ENCODE measurements at regions of chr11 and their contacts with region 1.

Region 1: DNA sequence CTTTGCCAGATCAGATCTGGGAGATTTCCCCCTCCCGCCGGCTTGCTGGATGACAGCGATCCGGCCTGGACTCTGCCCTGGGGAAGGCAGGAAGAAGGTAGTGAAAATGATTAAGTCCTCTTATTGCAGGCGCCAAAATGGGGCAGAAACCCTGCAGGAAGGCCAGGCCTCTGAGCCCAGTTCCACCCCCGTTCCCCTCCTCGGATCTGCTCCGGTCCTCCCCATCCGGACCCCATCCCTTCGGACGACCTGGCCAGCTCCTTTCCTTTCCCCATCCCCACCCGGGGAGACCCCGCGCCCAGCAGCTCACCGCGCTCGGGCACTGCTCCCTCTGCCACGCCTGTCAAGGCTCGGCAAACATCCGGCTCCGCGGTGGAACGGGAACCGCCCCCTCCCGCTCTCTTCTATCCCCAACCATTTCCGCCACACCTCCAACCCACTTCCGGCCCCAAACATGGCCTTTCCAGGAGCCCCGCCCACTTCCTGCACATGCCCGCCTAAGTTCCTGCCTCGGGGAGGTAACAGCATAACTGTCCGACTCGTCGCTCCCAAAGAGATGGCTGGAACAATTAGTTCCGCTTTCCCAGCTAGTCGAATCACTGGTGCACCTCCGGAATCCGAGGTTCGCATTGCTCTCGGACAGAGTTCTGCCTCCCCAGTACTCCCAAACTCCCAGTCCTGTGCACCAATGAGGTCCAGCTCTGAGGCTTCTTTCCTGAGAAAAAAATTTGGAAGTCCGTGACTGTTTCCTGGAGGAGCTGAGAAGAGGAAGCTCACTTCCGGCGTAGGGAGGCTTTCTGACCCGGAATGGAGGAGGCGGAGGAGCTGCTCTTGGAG is at the starts of genes ARHGAP1 and ZNF408:
- DNase-seq: peak; percentile 100
- ATAC-seq: peak; percentile 95
- H3K4me3 Mint-ChIP-seq: peak within 1 kb of the TSS; percentile 82
- H3K27ac Mint-ChIP-seq: peak within 1 kb of the TSS; percentile 96
- H3K4me1 Mint-ChIP-seq: peaks cover 42% of the 10 kb centered on the region
- H3K27me3 Mint-ChIP-seq: no peaks in the 10 kb centered on the region
- total RNA-seq, gene ARHGAP1: 40.2 to 50.0 TPM
- total RNA-seq, gene ZNF408: 8.8 to 9.0 TPM

Region 2: GRCh38 chr11:45804761-45805304 is 895.6 kb before region 1 on chr11 and contains the start of gene SLC35C1:
- CTCF ChIA-PET with region 1: no interaction called
- POLR2A ChIA-PET with region 1: no interaction called
- intact Hi-C with region 1: loop called in 1 of 2 experiments (anchors 2 kb)
- DNase-seq: peak; percentile 98
- ATAC-seq: peak; percentile 97
- H3K4me3 Mint-ChIP-seq: peak within 1 kb of the TSS; percentile 91
- H3K27ac Mint-ChIP-seq: peak within 1 kb of the TSS; percentile 86
- H3K4me1 Mint-ChIP-seq: peaks cover 42% of the 10 kb centered on the region
- H3K27me3 Mint-ChIP-seq: no peaks in the 10 kb centered on the region
- total RNA-seq, gene SLC35C1: 9.6 to 9.8 TPM

Region 3: DNA sequence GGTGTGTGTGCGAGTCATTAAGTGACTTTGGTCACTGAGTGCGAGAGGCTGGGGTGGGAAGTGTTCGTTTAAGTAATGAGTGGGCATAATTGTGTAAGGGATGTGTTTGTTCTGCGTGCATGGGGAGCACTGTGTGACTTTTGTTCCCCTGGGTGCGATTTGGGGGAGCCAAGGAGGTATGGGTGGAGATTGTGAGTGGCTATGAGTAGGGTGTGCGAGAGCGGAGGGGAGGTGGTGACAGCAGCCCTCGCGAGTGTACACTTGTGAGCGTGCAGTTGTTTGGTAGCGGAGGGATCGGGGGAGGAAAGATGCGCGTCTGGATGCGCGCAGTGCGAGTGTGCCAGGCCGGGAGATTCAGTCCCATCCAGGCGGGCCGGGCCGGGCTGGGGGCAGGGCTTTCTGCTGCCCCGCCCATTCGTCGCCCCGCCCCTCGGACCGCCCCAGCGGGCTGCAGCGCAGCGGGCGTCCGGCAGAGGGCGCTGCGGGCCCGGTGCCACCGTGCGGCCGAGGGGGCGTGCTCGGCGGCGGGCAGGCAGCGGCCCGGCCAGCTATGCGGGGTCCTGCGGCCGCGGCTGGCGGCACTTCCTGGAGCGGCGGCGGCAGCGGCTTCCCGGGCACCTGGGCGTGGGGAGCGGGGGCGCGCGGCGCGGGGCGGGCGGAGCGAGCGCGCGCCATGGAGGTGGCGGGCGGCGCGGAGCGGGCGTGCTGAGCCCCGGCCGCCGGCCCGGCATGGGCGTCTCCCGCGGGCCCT is 353.4 kb before region 1 on chr11 and contains the start of gene DGKZ:
- CTCF ChIA-PET with region 1: interaction called, 4 read pairs
- POLR2A ChIA-PET with region 1: no interaction called
- intact Hi-C with region 1: loop called in 1 of 2 experiments (anchors 1 kb)
- DNase-seq: peak; percentile 93
- ATAC-seq: peak; percentile 66
- H3K4me3 Mint-ChIP-seq: peak within 1 kb of the TSS; percentile 90
- H3K27ac Mint-ChIP-seq: peak within 1 kb of the TSS; percentile 96
- H3K4me1 Mint-ChIP-seq: peaks cover 81% of the 10 kb centered on the region
- H3K27me3 Mint-ChIP-seq: no peaks in the 10 kb centered on the region
- total RNA-seq, gene DGKZ: 87.6 to 101 TPM

Region 4: GRCh38 chr11:46616998-46617675 is 83.3 kb before region 1 on chr11 and contains the starts of genes ATG13 and HARBI1:
- CTCF ChIA-PET with region 1: interaction called, 4 read pairs
- POLR2A ChIA-PET with region 1: interaction called, 4 read pairs
- intact Hi-C with region 1: loop called (anchors 1 kb)
- DNase-seq: peak; percentile 95
- ATAC-seq: peak; percentile 96
- H3K4me3 Mint-ChIP-seq: peak within 1 kb of the TSS; percentile 89
- H3K27ac Mint-ChIP-seq: peak within 1 kb of the TSS; percentile 100
- H3K4me1 Mint-ChIP-seq: peaks cover 31% of the 10 kb centered on the region
- H3K27me3 Mint-ChIP-seq: no peaks in the 10 kb centered on the region
- total RNA-seq, gene ATG13: 39.4 to 56.4 TPM
- total RNA-seq, gene HARBI1: 2.3 to 2.7 TPM

Region 5: DNA sequence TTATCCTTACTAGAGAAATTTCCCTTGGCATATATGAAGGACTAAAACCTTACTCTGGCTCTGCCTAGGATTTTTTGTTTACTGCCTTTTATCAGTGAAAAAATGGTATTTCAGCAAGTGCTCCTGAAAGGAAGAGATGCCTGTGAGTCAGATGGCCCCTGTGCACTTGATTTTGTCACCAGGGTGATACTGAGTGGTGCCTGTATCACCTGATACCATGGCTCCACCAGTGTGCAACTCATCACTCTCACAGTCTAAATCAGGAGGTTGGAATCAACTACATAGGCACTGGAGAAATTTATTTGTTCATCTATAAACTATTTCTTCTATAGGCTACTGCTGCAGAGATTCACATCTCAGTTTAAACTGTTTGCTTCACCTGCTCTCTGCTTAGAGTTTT is 61.8 kb after region 1 on chr11:
- CTCF ChIA-PET with region 1: no interaction called
- POLR2A ChIA-PET with region 1: no interaction called
- intact Hi-C with region 1: no loop called
- DNase-seq: no peak
- ATAC-seq: no peak
- H3K4me3 Mint-ChIP-seq: no peak overlapping the region
- H3K27ac Mint-ChIP-seq: no peak overlapping the region
- H3K4me1 Mint-ChIP-seq: no peaks in the 10 kb centered on the region
- H3K27me3 Mint-ChIP-seq: no peaks in the 10 kb centered on the region

Region 6: DNA sequence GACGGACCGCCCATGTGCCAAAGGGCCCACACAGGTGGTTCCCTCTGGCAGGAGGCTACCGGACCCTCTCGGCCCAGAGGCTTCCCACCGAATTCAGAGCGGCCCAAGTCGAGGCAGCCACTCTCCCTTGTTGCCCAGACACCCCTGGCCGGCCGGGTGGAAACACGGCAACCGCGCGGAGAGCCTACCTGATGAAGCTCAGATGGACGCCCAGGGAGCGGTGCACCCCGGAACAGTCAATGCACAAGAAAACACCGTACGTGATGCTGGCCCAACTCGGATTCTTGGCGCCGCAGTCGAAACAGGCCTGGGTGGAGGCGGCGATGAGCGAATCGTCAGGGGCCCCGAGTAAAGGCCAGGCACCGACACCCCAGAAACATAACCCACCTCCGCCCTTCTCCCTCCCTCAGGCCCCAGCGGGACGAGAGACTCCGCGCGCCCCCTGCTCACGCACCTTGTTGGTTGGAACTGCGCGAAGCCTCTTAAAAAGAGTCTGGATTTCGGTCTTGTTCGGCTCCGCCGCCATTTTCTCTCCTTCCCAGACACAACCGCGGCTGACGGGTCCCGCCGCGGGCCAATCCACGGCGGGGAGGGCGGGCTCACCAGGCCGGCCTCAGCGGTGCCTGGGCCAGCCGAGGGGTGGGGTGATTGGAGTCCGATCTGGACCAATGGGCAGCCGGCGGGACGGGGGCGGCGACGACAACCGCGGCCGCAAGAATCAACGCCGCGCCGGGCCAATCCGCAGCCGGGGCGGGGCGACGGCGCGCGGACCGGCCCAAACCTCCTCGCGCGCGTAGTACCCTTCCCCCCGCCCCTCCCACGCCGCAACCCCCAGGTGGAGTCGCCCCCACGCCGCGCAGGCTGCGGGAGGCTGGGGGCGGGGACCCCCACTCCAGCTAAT is 476.1 kb after region 1 on chr11 and contains the start of gene ARFGAP2:
- CTCF ChIA-PET with region 1: no interaction called
- POLR2A ChIA-PET with region 1: no interaction called
- intact Hi-C with region 1: loop called (anchors 1 to 2 kb)
- DNase-seq: peak; percentile 98
- ATAC-seq: peak; percentile 95
- H3K4me3 Mint-ChIP-seq: peak within 1 kb of the TSS; percentile 96
- H3K27ac Mint-ChIP-seq: peak within 1 kb of the TSS; percentile 98
- H3K4me1 Mint-ChIP-seq: peaks cover 34% of the 10 kb centered on the region
- H3K27me3 Mint-ChIP-seq: no peaks in the 10 kb centered on the region
- total RNA-seq, gene ARFGAP2: 74.9 to 76.5 TPM

Region 7: DNA sequence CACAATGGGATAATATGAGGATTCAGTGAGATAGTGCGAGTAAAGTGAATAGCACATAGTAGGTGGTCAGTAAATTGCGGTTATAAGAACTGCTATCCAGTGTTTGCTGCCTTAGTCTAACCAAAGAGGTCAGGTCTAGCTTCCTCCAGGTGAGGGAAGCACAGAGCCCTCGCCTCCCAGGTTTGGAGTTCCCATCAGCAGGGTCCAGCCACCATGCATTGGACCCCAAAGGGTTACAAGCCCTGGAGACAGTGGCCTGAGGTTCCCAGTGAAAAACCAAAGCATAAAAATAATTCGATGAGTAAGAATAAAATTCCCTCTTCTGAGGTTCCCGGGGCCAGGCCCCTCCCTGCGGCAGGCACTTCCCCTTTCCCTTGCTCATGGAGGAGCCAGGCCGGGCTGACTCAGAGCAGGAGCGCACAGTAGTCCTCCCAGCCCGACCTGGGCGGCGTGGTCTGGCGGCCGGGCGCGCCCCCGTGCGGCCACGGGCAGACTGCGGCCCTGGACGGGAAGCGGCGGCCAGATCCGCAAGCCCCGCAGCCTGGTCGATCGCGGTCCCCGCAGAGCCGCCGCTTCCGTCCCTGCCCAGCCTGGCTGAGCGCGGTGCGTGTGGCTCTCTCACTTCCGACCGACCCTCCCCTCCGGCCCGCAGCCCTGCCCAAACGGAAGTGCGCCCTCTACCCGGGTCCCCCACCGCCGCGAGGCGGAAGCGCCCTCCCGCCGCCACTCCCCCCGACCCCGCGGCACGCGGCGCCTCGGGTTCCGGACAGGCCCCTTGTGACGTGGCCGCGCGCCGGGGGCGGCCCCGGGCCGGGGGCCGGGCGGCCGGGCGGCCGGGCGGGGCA is 707.5 kb after region 1 on chr11 and contains the start of gene SLC39A13:
- CTCF ChIA-PET with region 1: no interaction called
- POLR2A ChIA-PET with region 1: no interaction called
- intact Hi-C with region 1: loop called in 1 of 2 experiments (anchors 1 kb)
- DNase-seq: peak; percentile 95
- ATAC-seq: peak; percentile 91
- H3K4me3 Mint-ChIP-seq: peak within 1 kb of the TSS; percentile 89
- H3K27ac Mint-ChIP-seq: peak within 1 kb of the TSS; percentile 94
- H3K4me1 Mint-ChIP-seq: peaks cover 16% of the 10 kb centered on the region
- H3K27me3 Mint-ChIP-seq: no peaks in the 10 kb centered on the region
- total RNA-seq, gene SLC39A13: 8.6 to 10.7 TPM

Region 8: GRCh38 chr11:47642099-47642855 is 941.8 kb after region 1 on chr11 and contains the start of gene MTCH2:
- CTCF ChIA-PET with region 1: no interaction called
- POLR2A ChIA-PET with region 1: no interaction called
- intact Hi-C with region 1: loop called in 1 of 2 experiments (anchors 2 kb)
- DNase-seq: peak; percentile 98
- ATAC-seq: peak; percentile 94
- H3K4me3 Mint-ChIP-seq: peak within 1 kb of the TSS; percentile 99
- H3K27ac Mint-ChIP-seq: peak within 1 kb of the TSS; percentile 96
- H3K4me1 Mint-ChIP-seq: peaks cover 25% of the 10 kb centered on the region
- H3K27me3 Mint-ChIP-seq: no peaks in the 10 kb centered on the region
- total RNA-seq, gene MTCH2: 94.8 to 138 TPM